ENCODE measurements at regions of chr4 and their contacts with region 1.

Region 1: GRCh38 chr4:7266525-7267292 is 74.4 kb downstream of the SORCS2 start:
- DNase-seq: peak; percentile 90
- ATAC-seq: peak; percentile 82
- H3K4me3 ChIP-seq: peak overlapping the region; percentile 10; the same call in 1 of the 2 replicates
- H3K27ac ChIP-seq: peak overlapping the region; percentile 100
- H3K4me1 ChIP-seq: peaks cover 59% of the 10 kb centered on the region
- H3K27me3 ChIP-seq: no peaks in the 10 kb centered on the region
- CTCF ChIP-seq: no peak

Region 2: GRCh38 chr4:7161721-7162214 is 104.9 kb before region 1 on chr4:
- CTCF ChIA-PET with region 1: no interaction called
- POLR2A ChIA-PET with region 1: no interaction called
- intact Hi-C with region 1: no loop called
- DNase-seq: no peak
- ATAC-seq: no peak
- H3K4me3 ChIP-seq: no peak overlapping the region
- H3K27ac ChIP-seq: no peak overlapping the region
- H3K4me1 ChIP-seq: no peaks in the 10 kb centered on the region
- H3K27me3 ChIP-seq: no peaks in the 10 kb centered on the region
- CTCF ChIP-seq: no peak

Region 3: GRCh38 chr4:7217453-7218321 is 49.0 kb before region 1 on chr4:
- CTCF ChIA-PET with region 1: no interaction called
- POLR2A ChIA-PET with region 1: interaction called, 3 read pairs
- intact Hi-C with region 1: loop called (anchors 2 kb)
- DNase-seq: peak; percentile 91
- ATAC-seq: peak; percentile 98
- H3K4me3 ChIP-seq: no peak overlapping the region
- H3K27ac ChIP-seq: peak overlapping the region; percentile 97
- H3K4me1 ChIP-seq: peaks cover 31% of the 10 kb centered on the region
- H3K27me3 ChIP-seq: no peaks in the 10 kb centered on the region
- CTCF ChIP-seq: no peak

Region 4: GRCh38 chr4:7313347-7313811 is 46.7 kb after region 1 on chr4:
- CTCF ChIA-PET with region 1: no interaction called
- POLR2A ChIA-PET with region 1: no interaction called
- intact Hi-C with region 1: no loop called
- DNase-seq: no peak
- ATAC-seq: no peak
- H3K4me3 ChIP-seq: no peak overlapping the region
- H3K27ac ChIP-seq: no peak overlapping the region
- H3K4me1 ChIP-seq: no peaks in the 10 kb centered on the region
- H3K27me3 ChIP-seq: no peaks in the 10 kb centered on the region
- CTCF ChIP-seq: no peak

Region 5: DNA sequence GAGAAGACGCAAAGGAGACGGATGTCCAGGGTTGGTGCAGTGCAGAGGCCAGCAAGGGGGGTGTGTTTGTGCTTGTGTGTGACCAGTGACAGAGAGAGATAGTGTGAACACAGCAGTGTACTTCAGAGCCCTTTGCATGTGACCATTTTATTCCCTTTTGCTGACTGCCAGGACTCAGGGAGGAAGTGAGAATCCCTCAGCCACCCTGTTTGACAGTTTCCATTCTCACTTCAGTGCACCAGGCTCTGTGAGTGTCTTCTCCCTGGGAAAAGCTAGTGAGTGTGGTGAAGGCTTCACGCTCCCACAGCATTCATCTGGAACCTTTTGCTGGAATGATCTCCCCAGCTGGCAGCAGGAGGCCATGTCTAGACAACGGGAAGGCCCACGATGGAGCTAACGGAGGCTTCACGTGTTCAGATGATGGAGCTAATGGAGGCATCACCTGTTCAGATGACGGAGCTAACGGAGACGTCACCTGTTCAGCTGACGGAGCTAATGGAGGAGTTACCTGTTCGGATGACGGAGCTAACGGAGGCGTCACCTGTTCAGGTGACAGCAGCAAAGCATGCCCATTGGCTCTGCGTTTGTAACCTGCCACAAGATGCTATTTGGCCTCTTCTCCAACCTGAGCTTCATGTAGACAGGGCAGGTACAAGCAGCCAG is 477.6 kb after region 1 on chr4:
- CTCF ChIA-PET with region 1: no interaction called
- POLR2A ChIA-PET with region 1: no interaction called
- intact Hi-C with region 1: no loop called
- DNase-seq: no peak
- ATAC-seq: no peak
- H3K4me3 ChIP-seq: no peak overlapping the region
- H3K27ac ChIP-seq: no peak overlapping the region
- H3K4me1 ChIP-seq: peaks cover 9% of the 10 kb centered on the region
- H3K27me3 ChIP-seq: no peaks in the 10 kb centered on the region
- CTCF ChIP-seq: no peak

Measured in PC-3 (cell line).